HepG2 (cell line): ENCODE measurements at regions of chr13 and their contacts with region 1.

Region 1: DNA sequence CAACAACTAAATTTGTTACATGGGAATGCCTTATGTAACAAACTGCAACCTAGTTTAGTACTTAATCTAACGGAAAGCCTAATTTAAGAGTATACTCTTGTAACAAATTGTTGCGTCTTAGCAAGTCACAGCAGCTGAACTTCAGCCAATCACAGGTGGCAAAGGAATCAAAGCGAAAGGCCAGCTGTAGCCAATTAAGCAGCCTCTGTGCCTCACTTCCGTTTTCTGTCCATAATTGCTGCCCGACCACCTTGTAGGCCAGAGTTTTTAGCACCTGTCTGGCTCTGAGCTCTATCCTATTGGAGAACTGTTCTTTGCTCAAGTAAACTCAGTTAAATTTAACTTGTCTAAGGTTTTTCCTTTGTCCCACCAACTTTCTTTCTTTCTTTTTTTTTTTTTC is 18.1 kb upstream of the HSPH1 start:
- DNase-seq: no peak
- ATAC-seq: no peak
- H3K4me3 ChIP-seq: no peak overlapping the region
- H3K27ac ChIP-seq: no peak overlapping the region
- H3K4me1 ChIP-seq: 0 out of 2 replicates have a peak, but pooled peaks cover 19% of the 10 kb centered on the region
- H3K27me3 ChIP-seq: no peaks in the 10 kb centered on the region
- CTCF ChIP-seq: no peak
- EP300 ChIP-seq: no peak
- POLR2A ChIP-seq: no peak
- RAD21 ChIP-seq: no peak

Region 2: DNA sequence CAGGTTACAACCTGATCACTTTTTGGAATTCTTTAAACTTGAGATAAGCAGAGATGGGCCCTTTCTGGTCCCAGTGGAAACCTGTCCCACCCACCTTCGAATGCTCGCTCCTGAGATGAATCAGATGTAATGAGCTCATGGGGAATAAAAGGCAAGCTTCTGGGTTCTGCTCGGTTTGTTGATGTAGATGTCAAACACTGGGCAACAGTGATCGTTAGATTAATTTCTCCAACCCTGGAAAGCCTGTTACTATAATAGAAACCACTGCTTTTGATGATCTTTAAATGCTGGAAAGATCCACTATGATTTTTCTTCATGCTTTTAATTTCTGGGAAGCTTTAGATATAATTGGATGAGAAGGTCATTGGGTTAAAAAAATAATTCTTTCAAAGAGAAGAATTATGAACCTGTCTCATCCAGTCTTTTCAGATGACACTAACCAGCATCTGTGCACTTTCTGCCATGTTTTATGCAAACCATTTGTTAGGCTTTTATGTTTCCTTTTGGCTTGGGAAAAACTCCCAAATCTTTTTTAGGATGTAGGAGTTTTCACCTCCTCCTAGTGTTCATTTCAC is 69.3 kb after region 1 on chr13:
- CTCF ChIA-PET with region 1: no interaction called
- POLR2A ChIA-PET with region 1: no interaction called
- in situ Hi-C with region 1: no loop called
- intact Hi-C with region 1: loop called (anchors 2 kb)
- DNase-seq: no peak
- ATAC-seq: no peak
- H3K4me3 ChIP-seq: no peak overlapping the region
- H3K27ac ChIP-seq: no peak overlapping the region
- H3K4me1 ChIP-seq: no peaks in the 10 kb centered on the region
- H3K27me3 ChIP-seq: no peaks in the 10 kb centered on the region; a peak in 1 of 5 replicates
- CTCF ChIP-seq: no peak
- EP300 ChIP-seq: no peak
- POLR2A ChIP-seq: no peak
- RAD21 ChIP-seq: no peak